Activated CD8-positive, alpha-beta memory T cell treated with anti-CD3 and anti-CD28 coated beads, Interleukin-2, amount 10 ng/mL, durations not matched to agents 7 days and 5 days (primary cell): ENCODE measurements at regions of chr17 and their contacts with region 1.

Region 1: GRCh38 chr17:75515496-75516254 is at the start of gene CASKIN2:
- DNase-seq: peak; percentile 88
- ATAC-seq: peak; percentile 56
- H3K4me3 Mint-ChIP-seq: peak within 1 kb of the TSS; percentile 69
- H3K27ac Mint-ChIP-seq: no peak within 1 kb of the TSS
- H3K4me1 Mint-ChIP-seq: peaks cover 24% of the 10 kb centered on the region
- H3K27me3 Mint-ChIP-seq: no peaks in the 10 kb centered on the region
- total RNA-seq, gene CASKIN2: 2.3 to 4.5 TPM

Region 2: GRCh38 chr17:75430159-75430974 is 85.3 kb before region 1 on chr17:
- CTCF ChIA-PET with region 1: interaction called, 13 read pairs
- DNase-seq: no peak
- ATAC-seq: no peak
- H3K4me3 Mint-ChIP-seq: no peak overlapping the region
- H3K27ac Mint-ChIP-seq: no peak overlapping the region
- H3K4me1 Mint-ChIP-seq: peaks cover 22% of the 10 kb centered on the region
- H3K27me3 Mint-ChIP-seq: peaks cover 34% of the 10 kb centered on the region

Region 3: DNA sequence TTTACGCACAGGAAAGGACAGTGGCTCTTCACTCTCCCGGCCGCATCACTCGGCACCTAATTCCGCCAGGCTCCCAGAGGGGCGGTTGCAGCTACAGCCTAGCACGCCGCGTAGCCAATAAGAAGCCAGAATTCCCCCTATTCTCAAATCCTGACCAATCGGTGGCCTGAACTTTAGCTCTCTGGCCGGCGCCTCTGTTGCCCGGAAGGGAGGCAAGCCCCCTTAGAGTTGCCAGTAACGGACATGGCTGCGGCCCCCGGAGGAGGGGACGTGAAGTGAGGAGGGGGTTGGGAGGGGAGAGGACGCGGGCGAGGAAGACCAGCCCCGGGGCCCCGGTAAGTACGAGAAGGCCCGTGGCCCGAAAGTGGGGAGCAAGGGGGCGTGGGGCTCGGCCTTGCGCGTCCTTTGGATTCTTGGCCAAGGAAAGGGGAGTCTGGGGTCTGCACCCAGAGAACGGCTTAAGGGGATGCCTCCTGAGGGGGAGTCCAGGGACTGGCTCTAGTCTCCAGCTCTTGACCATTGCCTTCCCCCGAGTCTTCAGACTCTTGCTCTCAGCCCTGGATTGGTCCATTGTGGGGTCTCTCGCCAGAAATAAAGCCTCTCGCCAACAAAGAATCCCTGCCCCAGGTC is 59.1 kb before region 1 on chr17 and contains the start of gene TMEM94:
- CTCF ChIA-PET with region 1: interaction called, 23 read pairs
- DNase-seq: peak; percentile 96
- ATAC-seq: peak; percentile 99
- H3K4me3 Mint-ChIP-seq: peak within 1 kb of the TSS; percentile 86
- H3K27ac Mint-ChIP-seq: peak within 1 kb of the TSS; percentile 83
- H3K4me1 Mint-ChIP-seq: peaks cover 43% of the 10 kb centered on the region
- H3K27me3 Mint-ChIP-seq: no peaks in the 10 kb centered on the region
- total RNA-seq, gene TMEM94: 83.7 to 106 TPM

Region 4: DNA sequence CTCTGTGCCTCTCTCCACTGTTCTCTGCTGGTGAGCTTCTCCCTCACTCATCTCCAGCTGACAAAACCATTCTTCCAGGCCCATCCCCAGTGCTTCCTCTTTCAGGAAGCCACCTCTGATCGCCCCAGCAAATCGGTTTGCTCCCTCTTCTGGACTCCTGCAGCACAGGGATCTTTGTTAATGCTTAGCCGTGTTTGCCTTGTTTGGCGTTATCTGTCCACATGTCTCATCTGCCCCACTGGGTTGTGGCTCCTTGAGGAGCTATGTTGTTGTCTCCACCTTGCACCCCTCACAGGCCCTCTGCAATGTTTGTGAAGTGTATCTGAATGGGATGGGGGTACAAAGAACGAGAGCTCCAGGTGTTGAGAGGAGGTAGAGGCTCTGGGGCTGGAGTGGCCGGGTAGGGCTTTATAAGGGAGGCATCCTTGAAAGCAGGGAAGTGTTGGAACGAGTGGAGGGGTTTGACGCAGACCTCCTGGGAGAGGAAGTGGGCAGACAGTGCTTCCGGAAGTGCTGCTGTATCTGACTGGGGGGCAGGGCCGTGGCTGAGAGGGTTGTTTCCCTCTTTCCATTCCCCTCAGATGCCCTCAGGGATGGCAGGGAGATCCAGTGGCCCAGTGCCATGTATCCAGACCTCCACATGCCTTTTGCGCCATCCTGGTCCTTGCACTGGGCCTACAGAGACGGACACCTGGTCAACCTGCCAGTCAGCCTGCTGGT is 28.2 kb before region 1 on chr17:
- CTCF ChIA-PET with region 1: interaction called, 10 read pairs
- DNase-seq: peak; percentile 84
- ATAC-seq: peak; percentile 90
- H3K4me3 Mint-ChIP-seq: peak overlapping the region; percentile 50
- H3K27ac Mint-ChIP-seq: peak overlapping the region; percentile 95
- H3K4me1 Mint-ChIP-seq: peaks cover 23% of the 10 kb centered on the region
- H3K27me3 Mint-ChIP-seq: no peaks in the 10 kb centered on the region

Region 5: GRCh38 chr17:75535119-75535537 is 19.5 kb after region 1 on chr17:
- CTCF ChIA-PET with region 1: interaction called, 27 read pairs
- DNase-seq: peak; percentile 93
- ATAC-seq: peak; percentile 98
- H3K4me3 Mint-ChIP-seq: peak overlapping the region; percentile 27
- H3K27ac Mint-ChIP-seq: peak overlapping the region; percentile 88
- H3K4me1 Mint-ChIP-seq: peaks cover 30% of the 10 kb centered on the region
- H3K27me3 Mint-ChIP-seq: no peaks in the 10 kb centered on the region

Region 6: DNA sequence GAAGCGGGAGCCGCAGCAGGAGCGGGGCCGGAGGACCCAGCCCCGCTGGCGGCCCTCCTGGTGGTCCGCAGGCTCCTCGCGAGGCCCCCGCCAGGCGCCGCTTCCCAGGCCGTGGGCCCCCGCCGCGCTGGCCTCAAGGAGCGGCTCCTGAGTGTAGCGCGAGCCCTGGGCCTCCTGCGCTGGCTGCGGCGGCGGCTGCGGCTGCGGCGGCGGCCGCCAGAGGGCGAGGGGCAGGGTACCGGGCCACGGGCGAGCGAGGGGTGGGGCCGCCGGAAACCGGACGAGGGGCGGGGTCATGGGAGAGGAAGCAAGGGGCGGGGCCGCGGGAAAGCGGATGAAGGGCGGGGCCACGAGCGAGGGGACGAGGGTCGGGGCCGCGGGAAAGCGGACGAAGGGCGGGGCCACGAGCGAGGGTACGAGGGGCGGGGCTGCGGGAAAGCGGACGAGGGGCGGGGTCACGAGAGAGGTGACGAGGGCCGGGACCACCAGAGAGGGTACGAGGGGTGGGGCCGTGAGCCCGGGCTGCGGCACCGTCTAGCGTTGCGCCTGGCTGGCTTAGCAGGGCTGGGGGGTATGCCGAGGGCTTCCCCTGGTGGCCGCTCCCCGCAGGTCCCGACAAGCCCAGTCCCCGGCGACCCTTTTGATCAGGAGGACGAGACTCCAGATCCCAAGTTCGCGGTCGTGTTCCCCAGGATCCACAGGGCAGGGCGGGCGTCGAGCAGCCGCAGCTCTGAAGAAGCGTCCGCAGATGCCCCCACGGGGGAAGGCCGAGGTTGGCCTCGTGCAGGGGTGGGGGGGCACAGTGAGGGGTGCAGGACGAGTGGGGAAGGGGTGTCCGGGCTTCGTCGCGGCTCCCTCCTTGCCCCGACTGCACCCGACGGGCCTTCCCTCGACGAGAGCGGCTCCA is 73.6 kb after region 1 on chr17:
- CTCF ChIA-PET with region 1: interaction called, 23 read pairs
- DNase-seq: peak; percentile 97
- ATAC-seq: peak; percentile 82
- H3K4me3 Mint-ChIP-seq: peak overlapping the region; percentile 71
- H3K27ac Mint-ChIP-seq: peak overlapping the region; percentile 70
- H3K4me1 Mint-ChIP-seq: peaks cover 12% of the 10 kb centered on the region
- H3K27me3 Mint-ChIP-seq: peaks cover 27% of the 10 kb centered on the region